GM18951 (cell line): ENCODE measurements at regions of chrX and their contacts with region 1.

Region 1: DNA sequence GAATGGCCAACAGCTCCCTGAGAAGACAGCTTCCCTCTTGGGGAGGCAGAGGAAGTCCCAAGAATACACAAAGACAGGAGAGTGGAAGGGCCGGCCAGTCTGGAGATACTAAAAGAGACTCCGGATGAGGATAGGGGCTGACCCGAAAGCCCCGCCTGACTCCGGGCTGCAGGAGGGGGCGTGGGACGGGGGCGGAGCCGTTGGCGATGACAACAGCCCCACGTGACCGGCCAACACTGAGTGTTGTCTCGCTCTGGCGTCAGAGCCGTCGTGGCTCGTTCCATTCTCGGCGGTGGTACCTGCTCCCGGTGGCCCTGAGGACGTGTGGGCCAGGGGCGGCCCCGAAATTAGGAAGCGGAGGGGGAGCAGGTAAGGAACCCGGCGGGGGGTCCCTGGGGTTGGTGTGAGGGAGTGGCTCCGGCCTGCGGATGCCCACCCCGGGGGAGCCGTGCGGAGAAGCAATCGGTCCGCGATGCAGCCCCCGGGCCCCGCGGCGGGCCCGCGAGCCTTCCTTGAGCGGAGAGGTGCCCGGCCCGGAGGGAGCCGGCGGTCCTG is at the start of gene BEX4:
- POLR2A ChIP-seq: peak; percentile 56

Region 2: GRCh38 chrX:103488332-103488731 is 273.4 kb after region 1 on chrX:
- in situ Hi-C with region 1: loop called (anchors 25 kb)
- POLR2A ChIP-seq: no peak